Endothelial cell of umbilical vein (primary cell): ENCODE measurements at regions of chr15 and their contacts with region 1.

Region 1: GRCh38 chr15:90436952-90437351 is 48.9 kb downstream of the IQGAP1 start:
- DNase-seq: no peak
- H3K4me3 ChIP-seq: no peak overlapping the region
- H3K27ac ChIP-seq: no peak overlapping the region
- H3K4me1 ChIP-seq: peaks cover 50% of the 10 kb centered on the region
- H3K27me3 ChIP-seq: no peaks in the 10 kb centered on the region
- CTCF ChIP-seq: no peak
- POLR2A ChIP-seq: no peak

Region 2: DNA sequence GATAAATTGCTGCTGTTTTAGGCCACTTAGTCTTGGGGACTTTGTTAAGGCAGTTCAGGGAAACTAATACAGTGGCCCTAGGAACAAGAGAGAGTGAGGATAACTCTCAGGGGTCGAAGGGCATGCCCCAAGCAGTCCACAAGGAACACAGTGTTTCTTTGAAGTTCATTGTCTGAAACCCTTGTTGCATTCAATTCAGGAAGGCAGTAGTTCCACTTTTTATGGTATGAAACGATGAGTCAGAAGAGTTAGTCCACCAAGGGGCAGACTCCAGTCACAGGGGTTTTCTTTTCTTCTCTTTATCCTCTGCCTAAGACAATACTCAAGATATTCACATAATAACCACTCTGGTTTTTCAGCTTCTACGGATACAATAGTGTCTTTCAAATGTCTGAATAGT is 885.5 kb before region 1 on chr15:
- CTCF ChIA-PET with region 1: no interaction called
- POLR2A ChIA-PET with region 1: no interaction called
- dilution Hi-C with region 1: no loop called
- intact Hi-C with region 1: no loop called
- DNase-seq: peak; percentile 14
- H3K4me3 ChIP-seq: no peak overlapping the region
- H3K27ac ChIP-seq: no peak overlapping the region
- H3K4me1 ChIP-seq: no peaks in the 10 kb centered on the region
- H3K27me3 ChIP-seq: peaks cover 3 to 8% of the 10 kb centered on the region in 2 experiments
- CTCF ChIP-seq: no peak
- POLR2A ChIP-seq: no peak

Region 3: GRCh38 chr15:90463381-90463780 is 26.4 kb after region 1 on chr15:
- CTCF ChIA-PET with region 1: no interaction called
- POLR2A ChIA-PET with region 1: no interaction called
- dilution Hi-C with region 1: no loop called
- intact Hi-C with region 1: loop called (anchors 1 kb)
- DNase-seq: peak; percentile 93
- H3K4me3 ChIP-seq: no peak overlapping the region
- H3K27ac ChIP-seq: peak overlapping the region; percentile 70
- H3K4me1 ChIP-seq: peaks cover 58% of the 10 kb centered on the region
- H3K27me3 ChIP-seq: no peaks in the 10 kb centered on the region
- CTCF ChIP-seq: no peak
- POLR2A ChIP-seq: no peak

Region 4: DNA sequence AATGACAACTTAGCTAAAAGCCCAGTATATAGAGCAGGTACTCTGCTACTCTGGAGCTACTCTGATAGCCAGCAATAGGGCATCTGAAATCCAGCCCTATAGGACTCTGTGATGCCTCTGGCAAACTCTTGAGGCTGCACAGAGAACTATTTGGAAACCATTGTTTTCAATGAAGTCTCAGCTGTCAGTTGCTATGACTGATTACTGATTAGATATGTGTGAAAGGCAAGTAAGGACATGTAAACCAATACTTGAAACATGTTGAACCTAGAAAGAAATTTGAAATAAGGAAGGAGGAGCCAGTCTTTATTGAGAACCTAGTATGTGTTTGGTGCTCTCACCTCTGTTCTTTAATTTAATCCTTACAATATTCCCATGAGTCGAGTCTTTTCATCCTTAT is 52.6 kb after region 1 on chr15:
- CTCF ChIA-PET with region 1: no interaction called
- POLR2A ChIA-PET with region 1: no interaction called
- dilution Hi-C with region 1: no loop called
- intact Hi-C with region 1: no loop called
- DNase-seq: no peak
- H3K4me3 ChIP-seq: no peak overlapping the region
- H3K27ac ChIP-seq: no peak overlapping the region
- H3K4me1 ChIP-seq: no peaks in the 10 kb centered on the region
- H3K27me3 ChIP-seq: no peaks in the 10 kb centered on the region
- CTCF ChIP-seq: no peak
- POLR2A ChIP-seq: no peak